Activated CD4-positive, alpha-beta memory T cell treated with anti-CD3 and anti-CD28 coated beads for 36 hours (primary cell): ENCODE measurements at regions of chr16 and their contacts with region 1.

Region 1: GRCh38 chr16:3129137-3130131 is 5.4 kb upstream of the ZNF213 start:
- DNase-seq: peak; percentile 82
- H3K4me3 Mint-ChIP-seq: peak overlapping the region; percentile 88
- H3K27ac Mint-ChIP-seq: peak overlapping the region; percentile 88
- H3K4me1 Mint-ChIP-seq: peaks cover 31% of the 10 kb centered on the region
- H3K27me3 Mint-ChIP-seq: no peaks in the 10 kb centered on the region

Region 2: GRCh38 chr16:2520092-2520783 is 609.2 kb before region 1 on chr16 and contains the start of gene AMDHD2:
- CTCF ChIA-PET with region 1: no interaction called
- POLR2A ChIA-PET with region 1: no interaction called
- intact Hi-C with region 1: no loop called
- DNase-seq: peak; percentile 94
- H3K4me3 Mint-ChIP-seq: peak within 1 kb of the TSS; percentile 83
- H3K27ac Mint-ChIP-seq: peak within 1 kb of the TSS; percentile 86
- H3K4me1 Mint-ChIP-seq: peaks cover 47% of the 10 kb centered on the region
- H3K27me3 Mint-ChIP-seq: no peaks in the 10 kb centered on the region
- total RNA-seq, gene AMDHD2: 28.3 to 30.5 TPM

Region 3: DNA sequence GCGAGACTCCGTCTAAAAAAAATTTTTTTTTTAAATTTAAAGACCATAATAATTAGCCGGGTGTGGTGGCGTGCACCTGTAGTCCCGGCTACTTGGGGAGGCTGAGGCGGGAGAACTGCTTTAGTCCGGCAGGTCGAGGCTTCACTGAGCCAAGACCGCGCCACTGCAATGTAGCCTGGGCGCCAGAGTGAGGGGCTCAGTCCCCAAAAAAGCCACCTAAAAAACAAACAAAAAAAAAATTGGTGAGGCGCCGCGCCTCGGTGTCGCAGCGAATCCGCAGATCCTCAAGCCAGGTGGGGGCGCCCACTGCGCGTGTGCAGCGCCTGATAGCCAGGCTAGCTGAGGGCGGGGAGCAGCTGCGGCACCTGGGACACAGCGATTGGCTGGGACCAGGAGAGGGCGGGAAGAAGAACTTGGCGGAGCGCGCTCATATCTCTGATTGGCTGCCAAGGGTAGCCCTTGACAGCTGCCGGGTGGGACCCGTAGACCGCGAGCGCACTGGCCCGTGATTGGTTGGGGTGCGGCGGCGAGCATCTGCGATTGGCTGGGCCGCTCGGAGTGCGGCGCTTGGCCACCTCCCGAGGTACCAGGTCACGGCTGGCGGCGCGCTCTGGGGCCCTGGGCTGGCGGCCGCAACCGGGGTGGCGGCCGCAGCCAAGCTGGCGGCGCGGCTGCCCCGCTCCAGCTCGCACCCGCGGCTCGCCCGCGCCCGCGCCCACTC is 125.7 kb before region 1 on chr16:
- CTCF ChIA-PET with region 1: interaction called, 12 read pairs
- POLR2A ChIA-PET with region 1: no interaction called
- intact Hi-C with region 1: no loop called
- DNase-seq: peak; percentile 99
- H3K4me3 Mint-ChIP-seq: peak overlapping the region; percentile 48
- H3K27ac Mint-ChIP-seq: peak overlapping the region; percentile 58
- H3K4me1 Mint-ChIP-seq: peaks cover 24% of the 10 kb centered on the region
- H3K27me3 Mint-ChIP-seq: peaks cover 5% of the 10 kb centered on the region

Region 4: DNA sequence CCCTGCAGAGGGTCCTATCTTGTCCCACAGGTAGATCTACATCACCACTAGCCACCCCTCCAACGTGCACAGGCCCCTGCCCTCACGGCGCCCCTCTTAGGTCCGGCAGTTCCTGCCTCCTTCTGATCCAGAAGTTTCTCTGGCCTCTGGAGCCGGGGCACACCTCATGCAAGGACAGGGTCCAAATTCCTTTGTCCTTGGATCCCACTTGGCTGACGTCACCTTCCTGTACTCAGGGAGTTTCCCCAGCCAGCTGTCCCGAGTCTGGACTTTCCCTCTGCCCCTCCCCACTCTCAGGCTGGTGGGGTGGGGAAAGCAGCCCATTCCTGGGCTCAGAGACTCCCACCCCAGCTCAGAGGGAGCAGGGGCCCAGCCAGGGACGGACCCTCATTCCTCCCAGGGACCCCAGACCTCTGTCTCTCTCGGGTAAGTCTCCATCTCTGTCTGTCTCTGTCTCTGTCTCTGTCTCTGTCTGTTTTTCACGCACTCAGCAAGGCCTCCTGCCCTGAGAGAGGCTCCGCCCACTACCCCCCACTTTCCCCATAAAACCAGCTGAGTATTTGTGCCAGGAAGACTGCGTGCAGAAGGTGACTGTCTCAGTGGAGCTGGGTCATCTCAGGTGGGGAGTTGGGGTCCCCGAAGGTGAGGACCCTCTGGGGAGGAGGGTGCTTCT is 64.2 kb before region 1 on chr16 and contains the start of gene IL32:
- CTCF ChIA-PET with region 1: interaction called, 270 read pairs
- POLR2A ChIA-PET with region 1: interaction called, 17 read pairs
- intact Hi-C with region 1: no loop called
- DNase-seq: peak; percentile 87
- H3K4me3 Mint-ChIP-seq: peak within 1 kb of the TSS; percentile 99
- H3K27ac Mint-ChIP-seq: peak within 1 kb of the TSS; percentile 100
- H3K4me1 Mint-ChIP-seq: peaks cover 67% of the 10 kb centered on the region
- H3K27me3 Mint-ChIP-seq: peaks cover 4% of the 10 kb centered on the region
- total RNA-seq, gene IL32: 2,504 to 2,532 TPM

Region 5: DNA sequence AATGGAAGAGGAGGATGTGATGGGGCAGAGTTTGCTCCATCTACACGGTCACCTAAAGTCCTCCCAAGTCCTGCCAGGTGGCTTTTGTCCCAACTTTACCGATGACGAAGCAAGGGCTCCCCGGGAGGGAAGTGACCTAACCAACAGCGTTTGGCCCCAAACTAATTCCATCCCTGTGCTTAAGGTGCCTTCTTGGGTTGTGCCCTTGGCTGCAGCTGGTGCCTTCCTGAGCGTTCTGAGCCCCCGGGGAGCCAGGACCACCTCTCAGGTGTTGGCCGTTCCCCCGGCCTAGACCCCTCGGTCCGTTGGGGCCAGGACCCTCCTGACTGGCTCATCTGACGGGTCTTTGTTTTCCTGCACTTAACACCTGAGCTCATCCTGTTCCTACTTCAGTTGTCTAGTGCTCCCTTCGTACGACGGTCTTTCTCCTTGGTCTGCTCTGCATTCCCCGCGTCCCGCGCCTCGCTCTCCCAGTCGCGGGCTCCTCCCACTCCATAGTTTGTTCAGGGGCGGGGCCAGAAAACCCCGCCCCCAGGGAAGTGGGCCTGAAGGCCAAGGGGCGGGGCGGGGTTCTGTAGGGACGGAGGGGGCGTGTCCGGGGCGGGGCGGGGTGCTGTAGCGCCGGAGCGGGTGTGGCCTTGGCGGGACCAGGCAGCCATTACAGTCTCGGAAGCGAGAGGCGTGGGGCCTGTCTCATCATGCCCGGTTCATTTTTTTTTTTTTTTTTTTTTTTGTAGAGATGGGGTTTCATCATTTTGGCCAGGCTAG is 29.5 kb before region 1 on chr16:
- CTCF ChIA-PET with region 1: interaction called, 266 read pairs
- POLR2A ChIA-PET with region 1: interaction called, 5 read pairs
- intact Hi-C with region 1: loop called (anchors 1 kb)
- DNase-seq: peak; percentile 97
- H3K4me3 Mint-ChIP-seq: peak overlapping the region; percentile 65
- H3K27ac Mint-ChIP-seq: peak overlapping the region; percentile 54
- H3K4me1 Mint-ChIP-seq: peaks cover 39% of the 10 kb centered on the region
- H3K27me3 Mint-ChIP-seq: no peaks in the 10 kb centered on the region

Region 6: GRCh38 chr16:3150346-3151218 is 21.1 kb after region 1 on chr16:
- CTCF ChIA-PET with region 1: interaction called, 80 read pairs
- POLR2A ChIA-PET with region 1: interaction called, 16 read pairs
- intact Hi-C with region 1: loop called (anchors 1 kb)
- DNase-seq: peak; percentile 100
- H3K4me3 Mint-ChIP-seq: peak overlapping the region; percentile 84
- H3K27ac Mint-ChIP-seq: peak overlapping the region; percentile 82
- H3K4me1 Mint-ChIP-seq: peaks cover 27% of the 10 kb centered on the region
- H3K27me3 Mint-ChIP-seq: peaks cover 12% of the 10 kb centered on the region

Region 7: GRCh38 chr16:3173892-3174617 is 44.6 kb after region 1 on chr16:
- CTCF ChIA-PET with region 1: interaction called, 14 read pairs
- POLR2A ChIA-PET with region 1: interaction called, 8 read pairs
- intact Hi-C with region 1: no loop called
- DNase-seq: peak; percentile 57
- H3K4me3 Mint-ChIP-seq: peak overlapping the region; percentile 71
- H3K27ac Mint-ChIP-seq: peak overlapping the region; percentile 19
- H3K4me1 Mint-ChIP-seq: peaks cover 34% of the 10 kb centered on the region
- H3K27me3 Mint-ChIP-seq: peaks cover 51% of the 10 kb centered on the region

Region 8: GRCh38 chr16:3690470-3690928 is 561.1 kb after region 1 on chr16:
- CTCF ChIA-PET with region 1: no interaction called
- POLR2A ChIA-PET with region 1: no interaction called
- intact Hi-C with region 1: no loop called
- DNase-seq: peak; percentile 90
- H3K4me3 Mint-ChIP-seq: no peak overlapping the region
- H3K27ac Mint-ChIP-seq: no peak overlapping the region
- H3K4me1 Mint-ChIP-seq: peaks cover 7% of the 10 kb centered on the region
- H3K27me3 Mint-ChIP-seq: no peaks in the 10 kb centered on the region